Activated CD4-positive, alpha-beta T cell treated with anti-CD3 and anti-CD28 coated beads, Interleukin-2, amount 10 ng/mL, durations not matched to agents 24 days and 14 days (primary cell): ENCODE measurements at regions of chr22 and their contacts with region 1.

Region 1: GRCh38 chr22:40044102-40044869 is 49.5 kb downstream of the FAM83F start:
- DNase-seq: peak; percentile 100
- H3K4me3 Mint-ChIP-seq: peak overlapping the region; percentile 92
- H3K27ac Mint-ChIP-seq: peak overlapping the region; percentile 99
- H3K4me1 Mint-ChIP-seq: peaks cover 14% of the 10 kb centered on the region
- H3K27me3 Mint-ChIP-seq: peaks cover 9% of the 10 kb centered on the region

Region 2: GRCh38 chr22:40009292-40009769 is 35.0 kb before region 1 on chr22:
- intact Hi-C with region 1: no loop called
- DNase-seq: no peak
- H3K4me3 Mint-ChIP-seq: peak overlapping the region; percentile 44
- H3K27ac Mint-ChIP-seq: peak overlapping the region; percentile 15
- H3K4me1 Mint-ChIP-seq: peaks cover 9% of the 10 kb centered on the region
- H3K27me3 Mint-ChIP-seq: peaks cover 33% of the 10 kb centered on the region

Region 3: DNA sequence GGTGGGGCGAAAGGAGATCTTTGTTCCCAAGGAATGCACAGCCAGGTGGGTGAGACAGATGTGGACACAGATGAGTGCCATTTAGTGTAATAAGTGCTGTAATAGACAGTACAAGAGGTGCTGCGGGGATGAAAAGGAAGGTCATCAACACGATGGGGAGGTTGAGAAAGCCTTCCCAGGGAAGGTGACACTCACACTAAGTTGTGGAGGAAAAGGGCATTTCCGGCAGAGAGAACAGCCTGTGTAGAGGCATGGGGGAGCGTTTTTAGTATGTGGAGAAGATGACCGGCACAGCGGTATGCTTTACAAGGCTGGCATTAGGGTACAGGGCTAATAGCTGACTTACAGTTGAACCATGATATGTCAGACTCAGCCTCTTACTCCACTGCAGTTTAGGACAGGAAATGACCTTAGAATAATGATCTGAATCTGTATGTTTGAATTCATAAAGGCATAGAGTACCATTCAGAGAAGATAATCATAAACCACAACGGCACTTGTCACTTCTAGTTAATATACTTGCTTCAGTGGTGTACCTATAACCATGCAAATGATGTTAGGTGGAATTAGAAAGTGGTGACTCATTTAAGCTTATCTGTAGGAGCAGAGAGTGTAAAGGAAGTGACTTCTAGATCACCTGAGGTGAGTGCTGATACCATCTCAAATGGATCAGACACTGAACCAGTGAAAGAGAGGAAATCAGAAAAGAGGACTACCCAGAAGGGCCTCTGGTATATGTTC is 11.0 kb after region 1 on chr22:
- intact Hi-C with region 1: loop called (anchors 1 kb)
- DNase-seq: peak; percentile 77
- H3K4me3 Mint-ChIP-seq: peak overlapping the region; percentile 71
- H3K27ac Mint-ChIP-seq: peak overlapping the region; percentile 95
- H3K4me1 Mint-ChIP-seq: peaks cover 57% of the 10 kb centered on the region
- H3K27me3 Mint-ChIP-seq: no peaks in the 10 kb centered on the region

Region 4: GRCh38 chr22:40856513-40857308 is 812.4 kb after region 1 on chr22 and contains the starts of genes ST13 and XPNPEP3:
- intact Hi-C with region 1: no loop called
- DNase-seq: peak; percentile 99
- H3K4me3 Mint-ChIP-seq: peak within 1 kb of the TSS; percentile 96
- H3K27ac Mint-ChIP-seq: peak within 1 kb of the TSS; percentile 100
- H3K4me1 Mint-ChIP-seq: peaks cover 42% of the 10 kb centered on the region
- H3K27me3 Mint-ChIP-seq: peaks cover 2% of the 10 kb centered on the region
- total RNA-seq, gene ST13: 210 and 215 TPM in 2 replicates
- total RNA-seq, gene XPNPEP3: 17.6 and 17.7 TPM in 2 replicates